ENCODE measurements at regions of chr1 and their contacts with region 1.

Region 1: GRCh38 chr1:234486498-234487448 is 7.8 kb upstream of the TARBP1 start:
- DNase-seq: no peak
- ATAC-seq: peak; percentile 77 to 90 (median 82)
- H3K4me3 ChIP-seq: no peak overlapping the region
- H3K27ac ChIP-seq: no peak overlapping the region
- H3K4me1 ChIP-seq: peaks cover 8% of the 10 kb centered on the region
- H3K27me3 ChIP-seq: no peaks in the 10 kb centered on the region
- CTCF ChIP-seq: peak; percentile 76

Region 2: DNA sequence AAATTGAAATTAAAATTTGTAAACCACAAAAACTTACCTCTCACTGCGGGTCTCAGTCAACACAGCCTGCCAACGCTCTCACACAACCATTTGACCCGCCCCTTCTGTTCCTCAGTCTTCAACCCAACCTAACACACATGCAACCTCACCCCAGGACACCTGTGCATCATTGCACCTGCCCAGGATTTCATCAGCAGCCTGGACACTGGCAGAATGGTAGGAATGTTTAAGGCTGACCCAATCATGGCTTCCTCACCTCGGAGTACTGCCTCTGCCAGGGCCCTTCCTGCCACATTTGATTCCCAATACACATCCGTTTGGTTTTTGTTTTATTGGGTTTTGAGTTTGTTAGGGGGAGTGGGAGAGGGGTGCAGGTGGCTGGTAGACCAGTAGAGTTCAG is 601.1 kb after region 1 on chr1:
- intact Hi-C with region 1: loop called (anchors 5 kb)
- DNase-seq: no peak
- ATAC-seq: no peak
- H3K4me3 ChIP-seq: no peak overlapping the region
- H3K27ac ChIP-seq: no peak overlapping the region
- H3K4me1 ChIP-seq: peaks cover 12% of the 10 kb centered on the region
- H3K27me3 ChIP-seq: no peaks in the 10 kb centered on the region
- CTCF ChIP-seq: no peak

Region 3: GRCh38 chr1:235093696-235094592 is 607.2 kb after region 1 on chr1:
- intact Hi-C with region 1: loop called (anchors 5 kb)
- DNase-seq: peak; percentile 78 to 85
- ATAC-seq: peak; percentile 73 to 90 (median 78)
- H3K4me3 ChIP-seq: peak overlapping the region; percentile 31
- H3K27ac ChIP-seq: no peak overlapping the region
- H3K4me1 ChIP-seq: peaks cover 7% of the 10 kb centered on the region
- H3K27me3 ChIP-seq: no peaks in the 10 kb centered on the region
- CTCF ChIP-seq: peak; percentile 89